ENCODE measurements at regions of chr3 and their contacts with region 1.

Region 1: GRCh38 chr3:66822186-66823008 is 175.7 kb upstream of the KBTBD8 start:
- DNase-seq: peak; percentile 74
- ATAC-seq: peak; percentile 70
- H3K4me3 Mint-ChIP-seq: no peak overlapping the region
- H3K27ac Mint-ChIP-seq: no peak overlapping the region
- H3K4me1 Mint-ChIP-seq: no peaks in the 10 kb centered on the region
- H3K27me3 Mint-ChIP-seq: peaks cover 14% of the 10 kb centered on the region

Region 2: GRCh38 chr3:66253790-66254620 is 568.4 kb before region 1 on chr3:
- CTCF ChIA-PET with region 1: interaction called, 26 read pairs
- DNase-seq: no peak
- ATAC-seq: no peak
- H3K4me3 Mint-ChIP-seq: no peak overlapping the region
- H3K27ac Mint-ChIP-seq: no peak overlapping the region
- H3K4me1 Mint-ChIP-seq: peaks cover 2% of the 10 kb centered on the region
- H3K27me3 Mint-ChIP-seq: no peaks in the 10 kb centered on the region

Region 3: DNA sequence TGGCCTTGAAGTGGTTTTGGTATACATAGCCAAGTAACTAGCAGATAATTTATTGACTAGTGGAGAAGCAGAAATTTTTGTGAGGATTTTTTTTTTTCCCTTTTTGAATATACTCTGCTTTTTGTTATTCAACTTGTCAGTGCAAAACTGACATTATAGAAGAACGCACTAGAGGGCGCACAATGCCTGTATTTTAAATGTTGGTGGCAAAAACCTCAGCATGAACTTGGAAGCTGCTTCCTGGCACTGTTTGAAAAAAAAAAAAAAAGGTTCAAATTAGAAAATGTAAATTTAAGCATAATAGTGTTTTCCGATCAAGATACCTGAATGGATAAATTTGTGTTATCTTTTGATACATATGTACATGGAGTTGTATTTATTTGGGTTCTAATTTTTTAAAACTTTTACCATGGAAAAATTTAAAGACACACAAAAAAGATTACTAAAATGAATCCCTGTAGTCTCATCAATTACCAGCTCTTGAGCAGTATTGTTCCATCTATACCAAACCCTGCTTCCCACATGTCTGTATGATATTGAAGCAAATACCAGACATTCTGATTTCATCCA is 545.6 kb before region 1 on chr3:
- CTCF ChIA-PET with region 1: interaction called, 24 read pairs
- DNase-seq: peak; percentile 73
- ATAC-seq: peak; percentile 47
- H3K4me3 Mint-ChIP-seq: no peak overlapping the region
- H3K27ac Mint-ChIP-seq: no peak overlapping the region
- H3K4me1 Mint-ChIP-seq: peaks cover 17% of the 10 kb centered on the region
- H3K27me3 Mint-ChIP-seq: no peaks in the 10 kb centered on the region

Region 4: DNA sequence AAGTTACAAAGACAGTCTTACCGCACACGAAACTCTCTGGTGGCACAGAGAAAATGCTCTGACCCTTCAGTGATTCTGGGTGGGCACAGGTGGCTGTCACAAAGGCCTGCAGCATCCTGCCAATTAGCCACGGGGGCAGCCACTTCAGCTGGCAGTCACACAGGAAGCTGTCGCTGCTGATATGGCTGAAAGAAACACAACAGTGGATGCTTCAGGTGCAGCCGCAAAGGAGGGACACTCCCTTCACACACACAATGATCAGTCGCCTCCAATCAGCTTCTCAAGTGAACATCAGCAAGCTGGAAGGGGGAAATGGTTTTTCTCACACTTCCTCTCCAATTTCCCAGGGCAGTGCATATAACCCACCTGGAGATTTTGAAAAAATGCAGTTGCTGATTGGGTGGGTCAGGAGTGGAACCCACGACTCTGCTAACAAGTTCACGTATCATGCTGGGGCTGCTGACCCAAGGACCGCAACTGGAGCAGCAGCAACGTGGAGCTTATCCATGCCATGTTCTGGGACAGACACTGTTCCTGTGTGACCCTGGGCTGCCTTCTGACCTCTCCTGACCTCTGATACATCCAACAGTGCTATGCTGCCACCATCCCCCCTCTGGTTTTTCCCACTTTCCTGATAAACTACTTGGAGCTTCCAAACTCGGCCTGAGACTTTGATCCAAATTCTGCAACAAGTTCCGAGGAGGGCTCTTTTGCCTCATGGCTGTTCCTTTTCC is 428.2 kb before region 1 on chr3:
- CTCF ChIA-PET with region 1: interaction called, 10 read pairs
- DNase-seq: peak; percentile 73
- ATAC-seq: peak; percentile 88
- H3K4me3 Mint-ChIP-seq: peak overlapping the region; percentile 11
- H3K27ac Mint-ChIP-seq: peak overlapping the region; percentile 90
- H3K4me1 Mint-ChIP-seq: peaks cover 23% of the 10 kb centered on the region
- H3K27me3 Mint-ChIP-seq: no peaks in the 10 kb centered on the region

Region 5: GRCh38 chr3:66407611-66408218 is 414.7 kb before region 1 on chr3:
- CTCF ChIA-PET with region 1: interaction called, 15 read pairs
- DNase-seq: peak; percentile 78
- ATAC-seq: peak; percentile 88
- H3K4me3 Mint-ChIP-seq: no peak overlapping the region
- H3K27ac Mint-ChIP-seq: peak overlapping the region; percentile 28
- H3K4me1 Mint-ChIP-seq: peaks cover 12% of the 10 kb centered on the region
- H3K27me3 Mint-ChIP-seq: no peaks in the 10 kb centered on the region

Region 6: GRCh38 chr3:66456711-66457173 is 365.7 kb before region 1 on chr3:
- CTCF ChIA-PET with region 1: no interaction called
- DNase-seq: no peak
- ATAC-seq: peak; percentile 23
- H3K4me3 Mint-ChIP-seq: no peak overlapping the region
- H3K27ac Mint-ChIP-seq: no peak overlapping the region
- H3K4me1 Mint-ChIP-seq: peaks cover 11% of the 10 kb centered on the region
- H3K27me3 Mint-ChIP-seq: no peaks in the 10 kb centered on the region

Region 7: DNA sequence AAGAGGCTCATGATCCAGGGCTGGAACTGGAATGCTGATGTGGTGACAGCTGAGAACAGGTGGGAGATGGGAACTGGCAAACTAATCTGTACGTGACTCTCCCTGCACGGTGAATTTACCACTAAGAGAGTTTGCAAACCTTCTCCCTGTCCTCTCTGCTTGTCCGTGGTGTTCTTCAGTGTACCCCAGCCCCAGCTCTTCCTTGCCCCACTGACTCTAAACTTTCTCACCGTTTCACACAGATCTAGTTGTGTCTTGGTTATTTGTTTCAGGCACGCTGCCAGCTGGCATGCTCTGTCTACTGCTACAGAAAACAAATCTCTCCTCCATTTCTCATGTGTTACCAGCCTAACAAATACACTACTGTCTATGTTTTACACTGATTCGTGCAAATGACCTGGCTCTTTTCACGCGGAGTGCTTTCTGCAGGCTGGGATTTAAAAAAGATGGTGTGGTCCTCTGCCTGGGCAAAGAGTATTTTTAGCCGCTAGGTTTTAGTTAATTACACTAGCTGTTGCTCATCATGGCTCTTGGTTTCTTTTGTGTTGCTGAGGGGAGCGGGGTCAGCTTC is 128.9 kb before region 1 on chr3:
- CTCF ChIA-PET with region 1: no interaction called
- DNase-seq: no peak
- ATAC-seq: no peak
- H3K4me3 Mint-ChIP-seq: no peak overlapping the region
- H3K27ac Mint-ChIP-seq: no peak overlapping the region
- H3K4me1 Mint-ChIP-seq: no peaks in the 10 kb centered on the region
- H3K27me3 Mint-ChIP-seq: no peaks in the 10 kb centered on the region

Region 8: DNA sequence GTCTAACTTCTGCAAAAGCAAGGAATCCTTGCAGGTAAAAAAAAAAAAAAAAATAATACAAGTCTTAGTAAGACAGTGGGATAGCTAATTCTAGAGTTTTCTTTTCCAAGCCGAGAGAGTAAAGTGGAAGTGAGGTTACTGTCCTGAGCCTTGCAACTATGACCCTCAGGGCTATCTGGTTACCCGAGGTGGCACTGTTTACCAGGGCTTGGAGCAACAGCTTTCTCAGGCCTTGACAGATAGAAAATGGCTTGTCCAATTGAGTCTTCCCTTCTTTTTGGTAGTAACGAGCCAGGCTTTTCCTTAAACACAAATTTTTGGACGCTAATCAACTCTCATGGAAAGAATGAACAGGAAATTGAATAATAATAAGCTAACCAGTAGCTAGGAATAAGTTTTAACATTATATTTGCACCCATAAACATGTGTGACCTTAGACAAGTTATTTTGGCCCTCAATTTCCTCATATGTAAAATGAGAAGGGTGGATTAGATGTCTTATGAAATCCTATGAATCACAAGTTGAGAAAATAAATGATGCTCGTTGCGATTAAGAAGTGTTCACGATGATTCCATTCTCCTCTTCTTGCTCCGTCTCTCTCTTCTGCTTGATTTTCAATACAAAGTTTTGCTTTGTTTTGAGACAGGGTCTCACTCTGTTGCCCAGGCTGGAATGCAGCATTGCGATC is 61.2 kb before region 1 on chr3:
- CTCF ChIA-PET with region 1: no interaction called
- DNase-seq: no peak
- ATAC-seq: no peak
- H3K4me3 Mint-ChIP-seq: no peak overlapping the region
- H3K27ac Mint-ChIP-seq: no peak overlapping the region
- H3K4me1 Mint-ChIP-seq: no peaks in the 10 kb centered on the region
- H3K27me3 Mint-ChIP-seq: no peaks in the 10 kb centered on the region

Region 9: GRCh38 chr3:67037615-67038014 is 215.2 kb after region 1 on chr3:
- CTCF ChIA-PET with region 1: no interaction called
- DNase-seq: no peak
- ATAC-seq: no peak
- H3K4me3 Mint-ChIP-seq: no peak overlapping the region
- H3K27ac Mint-ChIP-seq: no peak overlapping the region
- H3K4me1 Mint-ChIP-seq: no peaks in the 10 kb centered on the region
- H3K27me3 Mint-ChIP-seq: peaks cover 5% of the 10 kb centered on the region